ENCODE measurements at regions of chr22 and their contacts with region 1.

Region 1: GRCh38 chr22:28829358-28830181 is 29.2 kb upstream of the XBP1 start:
- DNase-seq: peak; percentile 84
- ATAC-seq: peak; percentile 74
- H3K4me3 Mint-ChIP-seq: no peak overlapping the region
- H3K27ac Mint-ChIP-seq: no peak overlapping the region
- H3K4me1 Mint-ChIP-seq: peaks cover 5% of the 10 kb centered on the region
- H3K27me3 Mint-ChIP-seq: peaks cover 2% of the 10 kb centered on the region

Region 2: DNA sequence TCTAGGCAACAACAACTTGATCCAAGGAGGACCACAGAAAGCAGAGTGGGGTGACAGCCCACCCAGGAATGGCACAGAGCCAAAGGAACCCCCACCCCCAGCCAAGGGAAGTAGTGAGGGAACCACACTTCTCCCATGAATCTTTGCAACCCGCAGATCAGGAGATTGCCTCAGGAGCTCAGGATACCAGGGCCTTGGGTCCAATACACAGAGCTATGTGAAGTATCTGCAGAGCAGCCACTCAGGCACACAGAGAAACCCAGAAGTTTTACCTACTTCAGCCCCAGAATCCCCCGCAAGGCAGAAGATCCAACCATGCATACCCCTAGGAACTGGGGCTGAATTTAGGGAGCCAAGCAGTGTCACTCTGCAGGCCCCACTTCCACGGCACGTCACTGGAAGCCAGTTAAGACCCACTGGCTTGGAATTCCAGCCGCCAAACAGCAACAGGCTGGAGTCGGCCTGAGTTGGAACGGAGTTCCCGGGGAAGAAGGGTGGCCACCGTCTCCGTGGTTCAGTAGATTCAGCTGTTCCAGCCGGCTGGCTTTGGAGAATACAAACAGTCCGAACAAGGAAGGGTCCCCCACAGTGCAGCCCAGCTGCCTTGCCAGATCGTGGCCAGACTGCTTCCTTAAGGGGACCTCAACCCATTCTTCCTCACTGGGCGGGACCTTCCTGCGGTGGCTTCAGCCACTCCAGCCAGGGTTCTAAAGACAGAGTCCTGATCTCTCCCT is 324.0 kb before region 1 on chr22:
- CTCF ChIA-PET with region 1: no interaction called
- POLR2A ChIA-PET with region 1: no interaction called
- intact Hi-C with region 1: no loop called
- DNase-seq: no peak
- ATAC-seq: no peak
- H3K4me3 Mint-ChIP-seq: no peak overlapping the region
- H3K27ac Mint-ChIP-seq: no peak overlapping the region
- H3K4me1 Mint-ChIP-seq: no peaks in the 10 kb centered on the region
- H3K27me3 Mint-ChIP-seq: peaks cover 23% of the 10 kb centered on the region

Region 3: GRCh38 chr22:28594797-28595462 is 234.6 kb before region 1 on chr22:
- CTCF ChIA-PET with region 1: interaction called, 60 read pairs
- POLR2A ChIA-PET with region 1: no interaction called
- intact Hi-C with region 1: loop called (anchors 1 kb)
- DNase-seq: no peak
- ATAC-seq: peak; percentile 65
- H3K4me3 Mint-ChIP-seq: no peak overlapping the region
- H3K27ac Mint-ChIP-seq: no peak overlapping the region
- H3K4me1 Mint-ChIP-seq: no peaks in the 10 kb centered on the region
- H3K27me3 Mint-ChIP-seq: peaks cover 6% of the 10 kb centered on the region

Region 4: GRCh38 chr22:28741758-28742561 is 87.6 kb before region 1 on chr22 and contains the starts of genes CHEK2 and HSCB:
- CTCF ChIA-PET with region 1: interaction called, 4 read pairs
- POLR2A ChIA-PET with region 1: no interaction called
- intact Hi-C with region 1: loop called in 1 of 2 experiments (anchors 1 kb)
- DNase-seq: peak; percentile 99
- ATAC-seq: peak; percentile 93
- H3K4me3 Mint-ChIP-seq: peak within 1 kb of the TSS; percentile 81
- H3K27ac Mint-ChIP-seq: peak within 1 kb of the TSS; percentile 83
- H3K4me1 Mint-ChIP-seq: peaks cover 32% of the 10 kb centered on the region
- H3K27me3 Mint-ChIP-seq: no peaks in the 10 kb centered on the region
- total RNA-seq, gene CHEK2: 37.5 to 41.3 TPM
- total RNA-seq, gene HSCB: 16.5 to 18.5 TPM

Region 5: GRCh38 chr22:28791841-28792490 is 37.6 kb before region 1 on chr22:
- CTCF ChIA-PET with region 1: interaction called, 28 read pairs
- POLR2A ChIA-PET with region 1: no interaction called
- intact Hi-C with region 1: loop called (anchors 1 to 2 kb)
- DNase-seq: no peak
- ATAC-seq: peak; percentile 11
- H3K4me3 Mint-ChIP-seq: no peak overlapping the region
- H3K27ac Mint-ChIP-seq: no peak overlapping the region
- H3K4me1 Mint-ChIP-seq: peaks cover 45% of the 10 kb centered on the region
- H3K27me3 Mint-ChIP-seq: no peaks in the 10 kb centered on the region

Region 6: GRCh38 chr22:28817919-28818909 is 11.4 kb before region 1 on chr22:
- CTCF ChIA-PET with region 1: interaction called, 46 read pairs
- POLR2A ChIA-PET with region 1: no interaction called
- intact Hi-C with region 1: no loop called
- DNase-seq: peak; percentile 16
- ATAC-seq: no peak
- H3K4me3 Mint-ChIP-seq: no peak overlapping the region
- H3K27ac Mint-ChIP-seq: peak overlapping the region; percentile 29
- H3K4me1 Mint-ChIP-seq: peaks cover 43% of the 10 kb centered on the region
- H3K27me3 Mint-ChIP-seq: no peaks in the 10 kb centered on the region

Measured in activated CD4-positive, alpha-beta T cell treated with anti-CD3 and anti-CD28 coated beads for 36 hours (primary cell).